Left ventricle myocardium superior (tissue), 1 donor: ENCODE measurements at regions of chr1 and their contacts with region 1.

Region 1: DNA sequence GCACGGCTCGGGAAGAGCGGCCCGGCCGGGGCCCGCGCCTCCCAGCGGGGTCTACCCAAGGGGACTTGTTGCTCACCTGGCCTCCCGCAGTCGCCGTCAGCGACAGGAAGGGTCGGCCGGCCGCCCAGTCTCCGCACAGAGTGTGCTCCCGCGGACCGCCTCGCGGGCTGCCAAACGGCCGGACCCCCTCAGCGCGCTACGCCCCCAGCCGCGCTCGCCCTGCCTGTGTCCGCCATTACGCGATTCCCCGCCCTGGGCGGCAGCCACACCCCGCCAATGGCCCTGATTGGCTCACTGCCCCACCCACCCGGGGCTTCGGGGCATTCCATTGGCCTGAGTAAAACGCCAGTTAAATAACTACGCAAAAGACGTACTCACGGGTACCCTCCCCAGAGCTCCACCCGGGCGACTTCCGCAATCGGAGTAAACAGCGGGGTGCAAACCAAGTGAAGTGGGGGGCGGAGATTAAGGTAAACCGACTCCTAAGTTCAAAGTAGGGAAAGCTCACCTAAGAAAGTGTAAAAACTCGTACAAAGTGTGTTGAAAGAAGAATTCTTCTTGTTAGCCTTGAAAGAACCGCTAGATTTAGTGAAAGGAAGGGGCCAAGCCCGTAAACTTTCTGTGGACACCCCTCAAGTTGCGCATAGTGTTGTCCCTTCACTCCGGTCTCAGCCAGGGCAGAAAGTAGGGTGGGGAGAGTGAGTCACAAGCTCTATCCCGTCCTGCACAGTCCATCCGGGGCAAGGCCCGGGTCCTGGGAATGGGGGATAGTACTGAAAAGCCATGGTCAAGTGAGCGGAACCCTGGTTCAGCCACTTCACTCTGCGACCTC is at the start of gene WASF2:
- DNase-seq: peak; percentile 97
- ATAC-seq: peak; percentile 92
- total RNA-seq, gene WASF2: 59.1 TPM

Region 2: GRCh38 chr1:27436204-27437159 is 53.6 kb before region 1 on chr1:
- intact Hi-C with region 1: loop called (anchors 10 kb)
- DNase-seq: no peak
- ATAC-seq: peak; percentile 78

Region 3: DNA sequence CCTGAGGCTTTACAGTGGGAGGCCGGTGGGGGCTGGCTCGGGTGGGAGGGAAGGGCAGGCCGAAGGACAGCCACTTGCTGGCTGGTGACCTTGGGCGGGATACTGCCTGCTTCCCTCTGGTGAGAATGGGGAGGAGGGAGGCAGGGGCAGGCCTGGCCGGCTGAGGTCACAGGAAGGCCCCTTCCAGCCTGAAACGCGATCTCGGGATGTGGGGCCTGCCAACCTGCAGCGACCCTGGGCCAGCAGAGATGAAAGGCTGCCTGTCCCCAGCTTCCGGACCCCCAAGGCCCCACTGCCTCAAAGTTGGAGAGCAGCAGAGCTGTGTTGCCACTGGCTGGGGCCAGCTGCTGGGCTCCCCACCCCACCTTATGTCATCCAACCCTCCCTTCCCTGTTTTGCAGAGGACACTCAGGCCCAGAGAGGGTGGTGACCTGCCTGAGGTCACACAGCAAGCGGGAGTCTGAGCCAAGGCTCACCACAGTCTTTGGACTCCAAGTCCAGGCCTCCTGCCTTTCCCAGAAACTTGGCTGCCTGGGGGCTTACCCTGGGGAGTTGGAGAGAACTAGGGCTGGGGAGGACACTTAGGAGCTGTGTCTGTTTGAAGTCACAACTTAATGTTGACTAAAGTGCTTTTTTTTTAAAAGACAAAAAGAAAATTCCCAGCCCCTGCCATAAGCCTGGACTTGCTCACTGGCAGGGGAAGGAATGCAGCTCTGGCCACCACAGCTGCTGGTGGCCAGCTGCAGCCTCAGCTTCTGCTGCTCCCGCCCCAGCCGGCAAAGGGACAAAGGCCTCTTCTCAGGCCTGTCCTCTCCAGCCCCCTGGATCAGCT is 14.7 kb after region 1 on chr1:
- intact Hi-C with region 1: loop called (anchors 1 kb)
- DNase-seq: peak; percentile 92
- ATAC-seq: peak; percentile 93

Region 4: DNA sequence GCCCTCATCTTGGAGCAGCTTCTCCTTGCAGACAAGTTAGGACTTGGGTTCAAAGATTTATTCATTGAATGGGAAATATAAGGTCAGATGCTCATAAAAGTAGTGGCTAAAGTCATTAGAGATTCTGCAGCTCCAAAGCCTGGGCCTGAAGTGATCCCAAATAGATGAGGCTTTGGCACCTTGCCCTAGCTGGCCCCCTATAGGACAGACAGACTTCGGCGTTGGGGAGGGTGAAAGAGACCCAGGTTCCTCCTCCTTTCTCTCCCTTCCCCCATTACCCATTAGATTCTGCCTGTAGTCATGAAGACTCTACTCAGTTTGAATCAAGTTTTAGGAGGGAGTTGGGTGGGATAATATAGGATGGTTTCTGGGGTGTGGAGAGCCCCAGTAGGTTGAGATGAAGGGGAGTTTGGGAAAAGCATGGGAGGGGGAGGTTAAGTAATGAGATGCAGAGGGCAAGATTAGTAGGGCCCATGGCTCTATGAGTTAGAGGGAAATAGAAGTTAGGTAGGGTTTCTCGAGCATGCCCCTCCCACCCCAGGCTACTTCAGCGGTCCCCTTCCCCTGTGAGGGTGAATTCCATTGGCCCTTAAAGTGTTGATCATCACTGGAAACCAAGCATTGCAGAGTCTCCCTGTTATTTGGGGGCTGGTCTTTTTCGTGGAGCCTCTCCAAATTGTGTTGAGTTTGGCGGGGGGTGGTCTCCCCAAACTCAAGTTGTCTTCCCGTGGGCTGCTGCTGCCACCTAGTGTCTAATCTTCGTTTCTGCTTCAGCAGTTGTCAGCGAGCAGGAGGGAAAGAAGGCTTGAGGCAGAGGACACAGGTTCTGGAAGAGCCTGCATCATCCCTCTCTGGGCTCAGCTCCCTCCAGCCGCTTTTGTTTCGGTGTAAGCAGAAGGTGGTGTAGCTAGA is 115.9 kb after region 1 on chr1:
- intact Hi-C with region 1: no loop called
- DNase-seq: peak; percentile 51
- ATAC-seq: no peak